Breast epithelium (tissue), 4 donors: ENCODE measurements at regions of chr1 and their contacts with region 1.

Region 1: DNA sequence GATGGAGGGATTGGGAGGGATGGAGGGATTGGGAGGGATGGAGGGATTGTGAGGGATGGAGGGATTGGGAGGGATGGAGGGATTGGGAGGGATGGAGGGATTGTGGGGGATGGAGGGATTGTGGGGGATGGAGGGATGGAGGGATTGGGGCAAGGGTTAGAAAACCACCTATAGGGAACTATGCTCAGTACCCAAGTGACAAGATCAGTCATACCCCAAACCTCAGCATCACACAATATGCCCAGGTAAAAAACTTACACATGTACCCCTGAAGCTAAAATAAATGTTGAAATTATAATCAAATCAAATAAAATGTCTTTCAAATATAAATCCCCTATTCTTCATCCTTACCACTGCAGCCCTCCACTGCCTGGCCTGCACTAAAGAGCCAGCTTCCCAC is 72.8 kb upstream of the HNRNPU start:
- DNase-seq: no peak
- H3K4me3 ChIP-seq: no peak overlapping the region
- H3K27ac ChIP-seq: no peak overlapping the region
- H3K4me1 ChIP-seq: no peaks in the 10 kb centered on the region
- H3K27me3 ChIP-seq: no peaks in the 10 kb centered on the region
- CTCF ChIP-seq: no peak
- POLR2A ChIP-seq: no peak

Region 2: GRCh38 chr1:243323491-243323890 is 1613.6 kb before region 1 on chr1:
- intact Hi-C with region 1: loop called (anchors 5 kb)
- DNase-seq: no peak
- H3K4me3 ChIP-seq: no peak overlapping the region
- H3K27ac ChIP-seq: no peak overlapping the region
- H3K4me1 ChIP-seq: no peaks in the 10 kb centered on the region
- H3K27me3 ChIP-seq: no peaks in the 10 kb centered on the region
- CTCF ChIP-seq: no peak
- POLR2A ChIP-seq: no peak

Region 3: GRCh38 chr1:245079021-245079609 is 142.0 kb after region 1 on chr1:
- intact Hi-C with region 1: no loop called
- DNase-seq: no peak
- H3K4me3 ChIP-seq: no peak overlapping the region
- H3K27ac ChIP-seq: no peak overlapping the region
- H3K4me1 ChIP-seq: no peaks in the 10 kb centered on the region
- H3K27me3 ChIP-seq: no peaks in the 10 kb centered on the region
- CTCF ChIP-seq: peak in 1 of 3 donors; percentile 39
- POLR2A ChIP-seq: no peak